ENCODE measurements at regions of chr11 and their contacts with region 1.

Region 1: DNA sequence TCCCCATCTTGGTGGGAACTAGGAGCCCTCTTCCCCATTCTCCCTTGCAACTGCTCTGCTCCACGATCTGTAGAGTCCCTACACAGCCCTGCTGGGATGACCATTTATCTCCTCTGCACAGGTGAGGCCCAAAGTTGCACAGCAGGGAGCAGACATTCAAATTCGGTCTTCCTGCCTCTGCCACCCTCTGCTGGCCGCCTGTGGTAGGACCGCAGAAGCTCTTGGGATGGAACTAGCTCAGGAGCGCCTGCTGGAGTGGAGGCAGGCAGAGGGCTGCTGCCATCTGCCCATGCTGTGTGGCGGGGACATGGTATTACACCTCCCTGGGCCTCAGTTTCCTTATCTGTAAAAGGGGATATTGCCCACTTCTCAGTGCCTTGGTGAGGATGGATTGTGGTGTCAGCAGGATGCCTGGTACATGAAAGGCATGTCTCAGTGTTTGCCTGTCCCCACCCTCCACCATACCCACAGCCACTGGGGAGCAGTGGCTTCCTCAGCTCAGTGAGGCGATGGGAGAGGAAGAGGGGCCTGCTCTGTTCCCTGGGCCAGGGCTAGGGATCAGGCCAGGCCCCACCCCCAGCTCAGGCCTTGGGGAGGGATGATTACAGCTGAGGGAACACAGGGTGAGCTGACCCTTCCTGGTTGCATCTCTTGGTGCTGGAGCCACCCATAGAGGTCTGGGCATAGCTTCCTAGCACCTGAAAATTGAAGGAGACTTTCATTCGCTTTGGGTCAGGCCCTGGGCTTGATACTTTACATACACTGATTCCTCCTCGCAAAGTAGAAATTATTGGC is 11.3 kb upstream of the OMP start:
- DNase-seq: peak; percentile 94
- ATAC-seq: peak; percentile 92
- H3K4me3 Mint-ChIP-seq: no peak overlapping the region
- H3K27ac Mint-ChIP-seq: peak overlapping the region; percentile 86; the same call in 1 of the 2 replicates
- H3K4me1 Mint-ChIP-seq: peaks cover 7% of the 10 kb centered on the region
- H3K27me3 Mint-ChIP-seq: no peaks in the 10 kb centered on the region
- CTCF ChIP-seq: peak; percentile 85

Region 2: DNA sequence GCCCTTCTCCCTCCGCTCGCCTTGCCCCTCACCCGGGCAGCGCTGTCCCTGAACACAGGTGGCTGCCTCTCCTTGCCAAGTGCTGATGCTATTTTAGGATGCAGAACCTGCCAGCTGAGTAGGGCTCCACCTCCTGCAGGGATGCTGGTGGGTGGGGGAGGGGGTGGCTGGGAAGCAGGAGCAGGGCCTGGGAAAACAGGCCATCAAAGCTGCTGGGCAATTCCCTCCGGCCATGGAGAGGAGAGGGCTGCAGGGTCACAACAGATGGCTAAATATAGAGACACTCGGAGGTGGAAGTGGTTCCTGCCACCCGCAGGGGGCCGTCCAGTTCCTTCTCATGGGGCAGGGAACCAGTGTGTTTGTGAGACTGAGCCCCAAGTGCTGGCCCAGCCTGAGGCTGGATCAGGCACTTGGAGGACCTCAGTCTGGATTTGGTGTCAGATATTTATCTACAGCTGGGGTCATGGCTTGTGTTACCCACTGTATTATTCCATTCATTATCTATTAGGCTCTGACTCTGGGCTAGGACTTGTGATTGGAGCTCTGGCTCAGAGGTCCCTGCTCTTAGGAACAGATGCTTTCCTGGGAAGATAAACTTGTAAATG is 480.4 kb before region 1 on chr11:
- CTCF ChIA-PET with region 1: no interaction called
- POLR2A ChIA-PET with region 1: no interaction called
- DNase-seq: no peak
- ATAC-seq: no peak
- H3K4me3 Mint-ChIP-seq: no peak overlapping the region
- H3K27ac Mint-ChIP-seq: no peak overlapping the region
- H3K4me1 Mint-ChIP-seq: peaks cover 27% of the 10 kb centered on the region
- H3K27me3 Mint-ChIP-seq: peaks cover 2% of the 10 kb centered on the region; the same call in 1 of the 2 replicates
- CTCF ChIP-seq: no peak

Region 3: DNA sequence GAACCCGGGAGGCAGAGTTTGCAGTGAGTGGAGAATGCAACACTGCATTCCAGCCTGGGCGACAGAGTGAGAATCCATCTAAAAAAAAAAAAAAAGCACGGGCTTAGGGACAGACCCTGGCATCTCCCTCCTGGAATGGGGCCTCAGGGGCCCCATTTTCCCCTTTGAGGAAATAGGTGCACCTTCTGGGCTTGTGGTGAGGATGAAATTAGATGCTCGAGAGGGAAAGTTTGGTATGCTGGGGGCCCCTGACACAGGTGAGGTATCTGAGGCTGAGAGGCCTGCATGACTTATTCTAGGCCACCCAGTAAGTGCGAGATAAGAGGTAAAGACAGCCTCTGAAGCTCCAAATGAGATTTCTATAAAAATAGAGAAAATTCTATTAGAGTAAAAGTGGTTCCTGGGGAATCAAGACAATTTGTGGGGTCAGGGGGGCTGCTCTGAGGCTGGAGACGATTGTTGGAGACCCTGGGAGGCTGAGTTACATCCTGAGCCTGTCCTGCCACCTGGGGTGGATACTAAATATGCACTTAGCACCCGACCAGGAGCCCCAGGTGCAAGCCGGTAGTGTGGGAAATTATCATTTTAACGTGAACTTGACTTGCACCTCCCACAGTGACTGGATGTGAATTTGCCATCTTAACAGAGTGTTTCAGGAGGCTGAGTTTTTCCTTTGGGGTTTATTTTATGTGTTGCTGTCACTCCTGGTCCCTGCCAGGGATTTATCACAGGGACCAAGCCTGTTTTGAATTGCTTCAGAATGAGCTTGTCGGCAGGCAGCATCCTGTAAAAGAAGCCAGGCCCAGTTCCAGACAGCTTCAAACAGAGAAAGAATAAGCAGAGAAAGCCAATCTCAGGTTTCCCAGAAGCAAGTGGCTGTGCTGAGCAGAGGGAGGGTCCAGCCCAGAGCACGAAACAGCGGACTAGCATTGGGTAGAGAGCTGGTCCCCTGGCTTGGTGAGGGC is 356.6 kb before region 1 on chr11:
- CTCF ChIA-PET with region 1: interaction called, 24 read pairs
- POLR2A ChIA-PET with region 1: no interaction called
- DNase-seq: no peak
- ATAC-seq: peak; percentile 9
- H3K4me3 Mint-ChIP-seq: no peak overlapping the region
- H3K27ac Mint-ChIP-seq: peak overlapping the region; percentile 67; the same call in 1 of the 2 replicates
- H3K4me1 Mint-ChIP-seq: peaks cover 33% of the 10 kb centered on the region
- H3K27me3 Mint-ChIP-seq: peaks cover 2% of the 10 kb centered on the region; the same call in 1 of the 2 replicates
- CTCF ChIP-seq: no peak

Region 4: DNA sequence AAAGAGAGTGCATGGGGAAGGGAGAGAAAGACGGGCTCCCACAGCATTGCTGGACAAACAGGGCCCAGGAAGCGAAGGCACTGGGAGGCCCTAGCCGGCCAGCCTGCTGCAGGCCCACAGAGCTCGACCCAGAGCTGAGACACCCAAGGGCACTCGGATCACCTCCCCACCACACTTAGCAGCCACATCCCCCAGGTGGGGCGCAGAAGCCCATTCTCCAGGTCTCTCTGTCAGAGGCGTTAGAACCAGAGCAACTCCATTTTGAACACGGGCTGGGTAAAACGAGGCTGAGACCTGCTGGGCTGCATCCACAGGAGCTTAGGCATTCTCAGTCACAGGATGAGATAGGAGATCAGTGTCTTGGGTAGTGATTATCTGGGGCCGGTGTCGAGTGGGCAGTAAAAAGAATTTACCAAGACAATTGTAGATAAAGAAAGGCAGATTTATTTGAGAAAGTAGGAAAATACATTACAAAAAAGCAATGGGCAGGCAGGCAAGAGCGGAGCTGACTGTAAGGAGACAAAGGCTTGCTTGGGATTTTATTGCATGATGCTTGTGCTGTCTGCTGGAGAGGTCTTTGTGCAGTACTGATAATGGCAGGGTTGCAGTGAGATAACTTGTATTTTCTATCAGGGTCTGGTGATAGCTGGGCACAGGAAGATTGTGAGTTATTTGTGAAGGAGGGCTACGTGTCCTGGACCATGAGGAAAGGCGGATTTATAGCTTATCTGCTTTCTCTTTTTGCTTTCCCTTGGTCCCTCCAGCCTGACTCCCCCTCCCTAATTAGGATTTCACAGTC is 37.9 kb before region 1 on chr11:
- CTCF ChIA-PET with region 1: interaction called, 51 read pairs
- POLR2A ChIA-PET with region 1: no interaction called
- DNase-seq: no peak
- ATAC-seq: no peak
- H3K4me3 Mint-ChIP-seq: no peak overlapping the region
- H3K27ac Mint-ChIP-seq: no peak overlapping the region
- H3K4me1 Mint-ChIP-seq: 0 out of 2 replicates have a peak, but pooled peaks cover 8% of the 10 kb centered on the region
- H3K27me3 Mint-ChIP-seq: peaks cover 3% of the 10 kb centered on the region
- CTCF ChIP-seq: no peak

Region 5: GRCh38 chr11:77107950-77108349 is 16.6 kb after region 1 on chr11:
- CTCF ChIA-PET with region 1: interaction called, 48 read pairs
- POLR2A ChIA-PET with region 1: interaction called, 3 read pairs
- DNase-seq: no peak
- ATAC-seq: no peak
- H3K4me3 Mint-ChIP-seq: no peak overlapping the region
- H3K27ac Mint-ChIP-seq: no peak overlapping the region
- H3K4me1 Mint-ChIP-seq: peaks cover 3% of the 10 kb centered on the region; the same call in 1 of the 2 replicates
- H3K27me3 Mint-ChIP-seq: no peaks in the 10 kb centered on the region
- CTCF ChIP-seq: no peak

Region 6: GRCh38 chr11:77140231-77140851 is 49.0 kb after region 1 on chr11:
- CTCF ChIA-PET with region 1: interaction called, 11 read pairs
- POLR2A ChIA-PET with region 1: no interaction called
- DNase-seq: peak; percentile 39
- ATAC-seq: peak; percentile 87
- H3K4me3 Mint-ChIP-seq: no peak overlapping the region
- H3K27ac Mint-ChIP-seq: no peak overlapping the region
- H3K4me1 Mint-ChIP-seq: peaks cover 13% of the 10 kb centered on the region
- H3K27me3 Mint-ChIP-seq: no peaks in the 10 kb centered on the region; the same call in 1 of the 2 replicates
- CTCF ChIP-seq: no peak

Region 7: GRCh38 chr11:77158041-77158695 is 66.8 kb after region 1 on chr11:
- CTCF ChIA-PET with region 1: no interaction called
- POLR2A ChIA-PET with region 1: no interaction called
- DNase-seq: no peak
- ATAC-seq: no peak
- H3K4me3 Mint-ChIP-seq: no peak overlapping the region
- H3K27ac Mint-ChIP-seq: no peak overlapping the region
- H3K4me1 Mint-ChIP-seq: no peaks in the 10 kb centered on the region
- H3K27me3 Mint-ChIP-seq: no peaks in the 10 kb centered on the region
- CTCF ChIP-seq: no peak